CD4-positive, alpha-beta memory T cell (primary cell): ENCODE measurements at regions of chr19 and their contacts with region 1.

Region 1: DNA sequence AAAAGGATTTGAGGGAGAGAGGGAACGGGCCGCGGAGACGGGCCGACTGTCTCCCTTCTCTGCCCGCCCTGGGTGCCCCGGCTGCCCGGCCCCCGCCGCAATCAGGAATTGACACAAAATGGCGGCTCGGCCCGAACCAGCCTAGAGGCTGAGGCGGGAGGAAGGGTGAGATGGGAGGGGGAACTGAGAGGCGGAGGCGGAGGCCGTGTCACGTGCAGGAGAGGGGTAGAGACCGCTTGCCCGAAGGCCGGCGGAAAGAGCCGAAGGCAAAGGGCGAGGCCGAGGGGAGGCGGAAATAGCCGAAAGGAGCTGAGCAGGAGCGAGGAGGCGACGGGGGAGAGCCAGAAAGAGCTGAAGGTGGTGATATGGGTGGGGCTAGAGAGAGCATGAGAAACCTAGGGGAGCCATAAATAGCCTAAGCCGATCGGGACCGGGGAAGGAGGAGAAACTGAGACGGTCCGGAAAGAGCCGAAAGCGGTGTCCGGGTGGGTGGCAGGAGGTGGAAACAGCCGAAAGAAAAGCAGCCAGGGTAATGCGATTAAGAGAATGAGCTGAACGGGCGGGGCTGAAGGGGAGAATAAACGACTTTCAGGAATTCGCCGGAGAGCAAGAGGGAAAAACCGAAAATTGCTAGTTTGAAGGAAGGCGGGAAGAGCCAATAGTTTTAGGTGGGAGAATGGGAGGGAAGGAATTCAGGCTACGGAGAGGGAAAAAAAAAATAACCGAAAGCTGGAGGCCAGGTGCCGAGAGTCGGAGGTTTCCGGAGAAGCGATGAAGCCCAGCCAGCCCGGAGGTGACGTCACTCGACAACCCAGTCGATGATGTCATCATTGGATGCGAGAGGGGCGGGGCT is at the start of gene ZC3H4:
- DNase-seq: peak; percentile 100
- H3K4me3 ChIP-seq: peak within 1 kb of the TSS; percentile 90 to 95
- H3K4me3 Mint-ChIP-seq: peak within 1 kb of the TSS; percentile 97 to 100 (median 98)
- H3K27ac ChIP-seq: peak within 1 kb of the TSS; percentile 98
- H3K27ac Mint-ChIP-seq: peak within 1 kb of the TSS; percentile 99 to 100 (median 100)
- H3K4me1 ChIP-seq: peaks cover 28% of the 10 kb centered on the region
- H3K4me1 Mint-ChIP-seq: peaks cover 17 to 46% (median 28%) of the 10 kb centered on the region in 4 donors
- H3K27me3 ChIP-seq: no peaks in the 10 kb centered on the region
- H3K27me3 Mint-ChIP-seq: no peaks in the 10 kb centered on the region
- total RNA-seq, gene ZC3H4: 74.8 to 75.7 TPM

Region 2: GRCh38 chr19:46860125-46860845 is 252.9 kb before region 1 on chr19:
- CTCF ChIA-PET with region 1: no interaction called
- POLR2A ChIA-PET with region 1: interaction called, 7 read pairs
- intact Hi-C with region 1: loop called (anchors 1 kb)
- DNase-seq: peak; percentile 93 to 96 (median 94)
- H3K4me3 ChIP-seq: peak overlapping the region; percentile 42 to 78
- H3K4me3 Mint-ChIP-seq: peak overlapping the region; percentile 91 to 98 (median 95)
- H3K27ac ChIP-seq: peak overlapping the region; percentile 79
- H3K27ac Mint-ChIP-seq: peak overlapping the region; percentile 94 to 99 (median 97)
- H3K4me1 ChIP-seq: peaks cover 62% of the 10 kb centered on the region
- H3K4me1 Mint-ChIP-seq: peaks cover 19 to 22% (median 19%) of the 10 kb centered on the region in 4 donors
- H3K27me3 ChIP-seq: no peaks in the 10 kb centered on the region
- H3K27me3 Mint-ChIP-seq: no peaks in the 10 kb centered on the region

Region 3: DNA sequence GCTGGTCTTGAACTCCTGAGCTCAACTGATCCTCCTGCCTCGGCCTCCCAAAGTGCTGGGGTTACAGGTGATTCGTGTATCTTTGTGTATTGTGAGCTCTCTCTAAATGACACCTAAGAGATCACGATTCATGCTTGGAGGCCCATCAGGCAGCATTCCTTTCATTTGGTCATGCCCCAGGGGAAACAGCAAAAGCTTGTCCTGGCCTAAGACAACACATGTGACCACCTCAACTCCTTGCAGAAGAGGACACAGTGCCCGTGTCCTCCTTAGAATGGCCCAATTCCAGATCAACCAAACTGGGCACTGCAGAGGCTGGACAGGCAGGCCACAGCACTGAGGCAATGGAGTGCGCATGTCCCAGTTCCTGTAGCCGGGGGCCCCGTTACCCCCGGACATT is 32.1 kb before region 1 on chr19:
- CTCF ChIA-PET with region 1: interaction called, 83 read pairs
- POLR2A ChIA-PET with region 1: interaction called, 109 read pairs
- intact Hi-C with region 1: loop called (anchors 5 kb)
- DNase-seq: no peak
- H3K4me3 ChIP-seq: no peak overlapping the region
- H3K4me3 Mint-ChIP-seq: no peak overlapping the region
- H3K27ac ChIP-seq: no peak overlapping the region
- H3K27ac Mint-ChIP-seq: peak overlapping the region in 1 of 7 donors; percentile 24
- H3K4me1 ChIP-seq: no peaks in the 10 kb centered on the region
- H3K4me1 Mint-ChIP-seq: peaks cover 0 to 4% (median 0%) of the 10 kb centered on the region in 4 donors
- H3K27me3 ChIP-seq: no peaks in the 10 kb centered on the region
- H3K27me3 Mint-ChIP-seq: no peaks in the 10 kb centered on the region

Region 4: GRCh38 chr19:47130591-47131227 is 17.5 kb after region 1 on chr19 and contains the start of gene SAE1:
- CTCF ChIA-PET with region 1: interaction called, 14 read pairs
- POLR2A ChIA-PET with region 1: interaction called, 48 read pairs
- intact Hi-C with region 1: loop called (anchors 2 kb)
- DNase-seq: peak; percentile 88 to 91 (median 90)
- H3K4me3 ChIP-seq: peak within 1 kb of the TSS; percentile 82 to 89
- H3K4me3 Mint-ChIP-seq: peak within 1 kb of the TSS; percentile 97 to 100 (median 100)
- H3K27ac ChIP-seq: peak within 1 kb of the TSS; percentile 73
- H3K27ac Mint-ChIP-seq: peak within 1 kb of the TSS; percentile 93 to 99 (median 98)
- H3K4me1 ChIP-seq: peaks cover 43% of the 10 kb centered on the region
- H3K4me1 Mint-ChIP-seq: peaks cover 33 to 55% (median 44%) of the 10 kb centered on the region in 4 donors
- H3K27me3 ChIP-seq: no peaks in the 10 kb centered on the region
- H3K27me3 Mint-ChIP-seq: no peaks in the 10 kb centered on the region
- total RNA-seq, gene SAE1: 35.3 to 36.0 TPM

Region 5: DNA sequence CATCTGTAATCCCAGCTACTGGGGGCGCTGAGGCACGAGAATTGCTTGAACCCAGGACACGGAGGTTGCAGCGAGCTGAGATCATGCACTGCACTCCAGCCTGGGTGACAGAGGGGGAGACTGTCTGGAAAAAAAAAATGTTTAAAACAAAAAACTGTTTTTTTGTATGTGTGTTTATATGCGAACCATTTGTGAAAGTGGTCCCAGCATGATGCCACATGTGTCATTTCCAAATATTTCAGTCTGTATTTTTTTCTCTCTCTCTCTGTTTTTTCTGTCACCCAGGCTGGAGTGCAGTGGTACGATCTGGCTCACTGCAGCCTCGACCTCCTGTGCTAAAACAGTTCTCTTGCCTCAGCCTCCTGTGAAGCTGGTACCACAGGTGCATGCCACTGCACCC is 54.8 kb after region 1 on chr19:
- CTCF ChIA-PET with region 1: no interaction called
- POLR2A ChIA-PET with region 1: no interaction called
- intact Hi-C with region 1: no loop called
- DNase-seq: no peak
- H3K4me3 ChIP-seq: no peak overlapping the region
- H3K4me3 Mint-ChIP-seq: no peak overlapping the region
- H3K27ac ChIP-seq: no peak overlapping the region
- H3K27ac Mint-ChIP-seq: peak overlapping the region in 1 of 7 donors; percentile 37
- H3K4me1 ChIP-seq: no peaks in the 10 kb centered on the region
- H3K4me1 Mint-ChIP-seq: peaks cover 8 to 25% (median 20%) of the 10 kb centered on the region in 4 donors
- H3K27me3 ChIP-seq: no peaks in the 10 kb centered on the region
- H3K27me3 Mint-ChIP-seq: no peaks in the 10 kb centered on the region

Region 6: GRCh38 chr19:47225746-47226425 is 112.7 kb after region 1 on chr19:
- CTCF ChIA-PET with region 1: no interaction called
- POLR2A ChIA-PET with region 1: interaction called, 36 read pairs
- intact Hi-C with region 1: no loop called
- DNase-seq: peak; percentile 83 to 87 (median 84)
- H3K4me3 ChIP-seq: peak overlapping the region in 1 of 2 donors; percentile 52
- H3K4me3 Mint-ChIP-seq: peak overlapping the region; percentile 22 to 79 (median 64)
- H3K27ac ChIP-seq: peak overlapping the region; percentile 80
- H3K27ac Mint-ChIP-seq: peak overlapping the region; percentile 74 to 96 (median 89)
- H3K4me1 ChIP-seq: peaks cover 41% of the 10 kb centered on the region
- H3K4me1 Mint-ChIP-seq: peaks cover 5 to 20% (median 11%) of the 10 kb centered on the region in 4 donors
- H3K27me3 ChIP-seq: no peaks in the 10 kb centered on the region
- H3K27me3 Mint-ChIP-seq: no peaks in the 10 kb centered on the region

Region 7: GRCh38 chr19:47348819-47349795 is 235.9 kb after region 1 on chr19 and contains the start of gene DHX34:
- CTCF ChIA-PET with region 1: no interaction called
- POLR2A ChIA-PET with region 1: interaction called, 10 read pairs
- intact Hi-C with region 1: no loop called
- DNase-seq: peak; percentile 99 to 100 (median 99)
- H3K4me3 ChIP-seq: peak within 1 kb of the TSS; percentile 67 to 70
- H3K4me3 Mint-ChIP-seq: peak within 1 kb of the TSS; percentile 88 to 99 (median 98)
- H3K27ac ChIP-seq: peak within 1 kb of the TSS; percentile 80
- H3K27ac Mint-ChIP-seq: peak within 1 kb of the TSS; percentile 86 to 99 (median 97)
- H3K4me1 ChIP-seq: peaks cover 27% of the 10 kb centered on the region
- H3K4me1 Mint-ChIP-seq: peaks cover 23 to 48% (median 34%) of the 10 kb centered on the region in 4 donors
- H3K27me3 ChIP-seq: no peaks in the 10 kb centered on the region
- H3K27me3 Mint-ChIP-seq: peaks cover 0 to 2% of the 10 kb centered on the region in 2 donors
- total RNA-seq, gene DHX34: 26.5 to 27.3 TPM